ENCODE measurements at regions of chr1 and their contacts with region 1.

Region 1: GRCh38 chr1:238811211-238811879 is 575.0 kb upstream of the CHRM3 start:
- DNase-seq: no peak
- H3K4me3 ChIP-seq: no peak overlapping the region
- H3K4me3 Mint-ChIP-seq: no peak overlapping the region
- H3K27ac Mint-ChIP-seq: no peak overlapping the region
- H3K4me1 ChIP-seq: no peaks in the 10 kb centered on the region
- H3K4me1 Mint-ChIP-seq: no peaks in the 10 kb centered on the region
- H3K27me3 ChIP-seq: no peaks in the 10 kb centered on the region
- H3K27me3 Mint-ChIP-seq: no peaks in the 10 kb centered on the region
- CTCF ChIP-seq: no peak

Region 2: DNA sequence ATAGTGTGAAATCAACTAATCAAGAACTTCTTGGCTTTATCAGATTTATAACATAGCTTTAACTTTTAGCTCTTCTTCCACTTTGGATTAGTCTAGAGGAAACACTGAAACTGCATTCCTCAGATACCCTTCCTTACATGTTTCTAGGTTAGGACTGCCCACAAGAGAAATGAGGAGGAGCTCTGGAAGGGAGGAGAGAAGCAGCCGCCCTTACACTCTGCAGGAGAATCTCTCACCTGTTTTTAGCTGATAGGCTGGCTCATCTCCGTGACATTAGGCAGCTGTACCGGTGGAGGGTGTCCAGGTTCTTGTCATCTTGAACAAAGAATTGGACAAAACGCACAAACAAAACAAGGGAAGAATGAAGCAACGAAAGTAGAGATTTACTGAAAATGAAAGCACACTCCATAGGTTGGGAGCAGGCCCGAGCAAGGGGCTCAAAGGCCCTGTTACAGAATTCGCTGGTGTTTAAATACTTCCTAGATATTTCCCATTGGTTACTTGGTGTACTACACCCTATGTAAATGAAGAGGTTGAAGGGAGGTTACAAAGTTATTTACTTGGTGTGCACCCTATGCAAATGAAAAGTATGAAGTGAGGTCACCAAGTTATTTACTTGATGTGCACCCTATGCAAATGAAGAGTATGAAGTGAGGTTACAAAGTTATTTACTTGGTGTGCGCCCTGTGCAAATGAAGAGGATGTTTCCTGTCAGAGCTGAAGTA is 50.2 kb after region 1 on chr1:
- CTCF ChIA-PET with region 1: no interaction called
- POLR2A ChIA-PET with region 1: interaction called, 13 read pairs
- intact Hi-C with region 1: no loop called
- DNase-seq: peak in 1 of 2 experiments; percentile 4
- H3K4me3 ChIP-seq: no peak overlapping the region
- H3K4me3 Mint-ChIP-seq: no peak overlapping the region
- H3K27ac Mint-ChIP-seq: no peak overlapping the region
- H3K4me1 ChIP-seq: no peaks in the 10 kb centered on the region
- H3K4me1 Mint-ChIP-seq: no peaks in the 10 kb centered on the region
- H3K27me3 ChIP-seq: no peaks in the 10 kb centered on the region
- H3K27me3 Mint-ChIP-seq: no peaks in the 10 kb centered on the region
- CTCF ChIP-seq: no peak

Region 3: DNA sequence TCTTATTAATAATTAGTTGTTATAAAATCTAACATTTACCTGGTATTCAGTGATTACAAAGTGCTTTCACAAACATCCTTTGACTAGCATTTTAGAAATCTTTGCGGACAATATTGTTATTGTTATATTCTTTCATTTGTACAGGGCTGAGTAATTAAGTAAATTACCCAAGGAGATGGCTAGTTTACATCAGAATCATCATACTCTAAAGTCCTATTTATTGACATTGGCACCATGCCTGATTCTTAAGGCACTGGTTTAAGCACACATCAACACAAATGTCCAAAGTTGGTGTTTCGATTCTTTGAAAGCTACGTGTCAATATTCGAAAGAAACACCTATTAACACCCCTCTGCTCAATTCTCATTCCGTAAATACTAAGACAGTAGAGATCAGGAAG is 150.4 kb after region 1 on chr1:
- CTCF ChIA-PET with region 1: no interaction called
- POLR2A ChIA-PET with region 1: no interaction called
- intact Hi-C with region 1: no loop called
- DNase-seq: no peak
- H3K4me3 ChIP-seq: no peak overlapping the region
- H3K4me3 Mint-ChIP-seq: no peak overlapping the region
- H3K27ac Mint-ChIP-seq: no peak overlapping the region
- H3K4me1 ChIP-seq: no peaks in the 10 kb centered on the region
- H3K4me1 Mint-ChIP-seq: no peaks in the 10 kb centered on the region
- H3K27me3 ChIP-seq: no peaks in the 10 kb centered on the region
- H3K27me3 Mint-ChIP-seq: peaks cover 3% of the 10 kb centered on the region
- CTCF ChIP-seq: no peak

Region 4: DNA sequence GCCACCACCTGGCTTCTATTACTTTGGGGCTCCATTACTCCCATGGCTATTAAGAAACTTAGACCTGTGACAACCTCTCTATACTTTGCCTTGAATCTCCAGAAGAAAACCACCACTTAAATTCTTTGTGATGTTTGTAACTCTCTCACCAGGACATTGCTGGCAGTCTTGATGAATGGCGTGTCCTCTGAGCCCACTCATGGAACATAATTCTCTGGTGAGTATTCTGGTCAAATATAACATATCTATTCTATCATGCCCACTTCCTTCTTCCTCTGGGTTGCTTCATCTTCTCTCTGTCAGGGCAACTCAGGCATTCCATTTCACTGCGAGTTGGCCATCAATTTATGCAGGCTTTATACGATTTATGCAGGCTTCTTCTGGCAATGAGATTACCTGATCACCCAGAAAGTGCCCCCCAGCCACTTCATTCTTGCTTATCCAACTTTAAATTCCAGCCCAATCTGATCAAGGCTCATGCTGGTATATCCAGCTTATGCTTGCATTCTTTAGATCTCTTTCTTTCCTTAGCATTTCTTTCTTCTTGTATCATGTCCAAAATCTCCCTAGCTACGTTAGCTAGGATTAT is 463.0 kb after region 1 on chr1:
- CTCF ChIA-PET with region 1: no interaction called
- POLR2A ChIA-PET with region 1: no interaction called
- intact Hi-C with region 1: no loop called
- DNase-seq: no peak
- H3K4me3 ChIP-seq: no peak overlapping the region
- H3K4me3 Mint-ChIP-seq: no peak overlapping the region
- H3K27ac Mint-ChIP-seq: no peak overlapping the region
- H3K4me1 ChIP-seq: no peaks in the 10 kb centered on the region
- H3K4me1 Mint-ChIP-seq: no peaks in the 10 kb centered on the region
- H3K27me3 ChIP-seq: no peaks in the 10 kb centered on the region
- H3K27me3 Mint-ChIP-seq: peaks cover 3% of the 10 kb centered on the region
- CTCF ChIP-seq: no peak

Measured in Caco-2 (cell line).